Ascending aorta (tissue), 2 donors: ENCODE measurements at regions of chr1 and their contacts with region 1.

Region 1: GRCh38 chr1:9196129-9197040 is 38.2 kb upstream of the H6PD start:
- DNase-seq: peak in 1 of 2 donors; percentile 86
- H3K4me3 ChIP-seq: peak overlapping the region; percentile 7 to 11
- H3K27ac ChIP-seq: peak overlapping the region in 1 of 2 donors; percentile 14
- H3K4me1 ChIP-seq: peaks cover 9 to 13% of the 10 kb centered on the region in 2 donors
- H3K27me3 ChIP-seq: no peaks in the 10 kb centered on the region
- CTCF ChIP-seq: peak; percentile 81 to 87 (median 85)

Region 2: GRCh38 chr1:8910914-8911313 is 285.5 kb before region 1 on chr1:
- intact Hi-C with region 1: loop called (anchors 10 kb)
- DNase-seq: no peak
- H3K4me3 ChIP-seq: no peak overlapping the region
- H3K27ac ChIP-seq: no peak overlapping the region
- H3K4me1 ChIP-seq: no peaks in the 10 kb centered on the region
- H3K27me3 ChIP-seq: no peaks in the 10 kb centered on the region
- CTCF ChIP-seq: no peak

Region 3: DNA sequence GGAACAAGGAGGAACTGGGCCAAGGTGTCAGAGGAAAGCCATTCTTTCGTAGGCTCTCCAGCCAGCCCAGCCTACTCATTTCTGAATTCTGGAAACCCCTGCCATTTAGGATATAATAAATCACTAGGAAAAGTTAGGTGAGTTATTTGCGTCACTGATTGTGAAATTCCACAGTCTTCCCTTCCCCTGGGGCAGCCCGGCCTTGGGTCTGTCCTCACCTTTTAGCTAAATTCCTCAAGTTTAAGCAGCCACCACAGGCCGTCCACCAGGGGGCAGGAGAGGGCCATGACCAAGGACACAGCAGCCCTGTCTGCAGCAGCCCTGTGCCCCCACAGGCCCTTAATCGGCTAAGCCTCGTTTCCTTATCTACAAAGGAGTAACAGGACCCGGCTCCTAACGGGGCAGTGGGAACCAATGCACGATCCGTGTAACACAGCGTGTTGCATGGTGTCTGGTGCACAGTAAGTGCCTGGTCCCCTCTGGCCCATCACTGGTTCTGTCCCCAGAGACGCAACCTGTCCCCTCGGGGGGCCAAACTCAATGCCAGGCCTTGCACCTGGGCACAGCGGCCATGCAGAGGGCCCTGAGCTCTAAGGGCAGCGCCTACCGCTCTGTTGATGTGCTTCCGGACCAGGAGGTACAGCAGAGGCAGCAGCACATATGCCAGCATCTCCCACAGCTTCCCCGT is 85.6 kb before region 1 on chr1:
- intact Hi-C with region 1: loop called (anchors 1 kb)
- DNase-seq: peak; percentile 47 to 94
- H3K4me3 ChIP-seq: no peak overlapping the region
- H3K27ac ChIP-seq: no peak overlapping the region
- H3K4me1 ChIP-seq: peaks cover 0 to 6% of the 10 kb centered on the region in 2 donors
- H3K27me3 ChIP-seq: no peaks in the 10 kb centered on the region
- CTCF ChIP-seq: peak; percentile 86 to 93 (median 93)

Region 4: GRCh38 chr1:9145021-9145668 is 51.2 kb before region 1 on chr1:
- intact Hi-C with region 1: loop called (anchors 1 kb)
- DNase-seq: no peak
- H3K4me3 ChIP-seq: no peak overlapping the region
- H3K27ac ChIP-seq: no peak overlapping the region
- H3K4me1 ChIP-seq: peaks cover 7 to 14% of the 10 kb centered on the region in 2 donors
- H3K27me3 ChIP-seq: no peaks in the 10 kb centered on the region
- CTCF ChIP-seq: no peak

Region 5: GRCh38 chr1:9181176-9181906 is 15.0 kb before region 1 on chr1:
- intact Hi-C with region 1: loop called (anchors 1 kb)
- DNase-seq: peak in 1 of 2 donors; percentile 82
- H3K4me3 ChIP-seq: peak overlapping the region; percentile 72 to 89
- H3K27ac ChIP-seq: peak overlapping the region; percentile 75
- H3K4me1 ChIP-seq: peaks cover 7 to 18% of the 10 kb centered on the region in 2 donors
- H3K27me3 ChIP-seq: no peaks in the 10 kb centered on the region
- CTCF ChIP-seq: peak; percentile 92 to 96 (median 96)